Activated CD8-positive, alpha-beta T cell treated with anti-CD3 and anti-CD28 coated beads for 36 hours (primary cell): ENCODE measurements at regions of chr10 and their contacts with region 1.

Region 1: DNA sequence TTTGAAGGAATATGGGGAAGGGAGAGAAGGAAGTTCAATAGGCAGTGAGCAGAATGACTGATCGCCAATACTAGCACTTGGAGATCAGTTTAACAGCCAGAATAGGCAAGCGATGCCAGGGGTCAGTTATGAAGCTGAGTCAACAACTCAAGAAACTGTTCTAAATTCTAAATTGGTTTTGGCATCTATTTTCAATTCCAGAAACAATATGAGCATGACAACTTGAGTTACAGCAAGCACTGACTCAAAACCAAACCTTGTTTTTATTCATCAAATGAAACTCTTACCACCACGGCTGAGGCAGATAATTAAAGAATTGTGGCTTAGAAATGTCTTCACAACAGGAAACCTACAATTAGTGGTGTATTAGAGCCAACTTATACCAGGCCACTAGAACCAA is 180.5 kb upstream of the ASAH2 start:
- DNase-seq: peak; percentile 54
- ATAC-seq: peak; percentile 77
- H3K4me3 Mint-ChIP-seq: peak overlapping the region; percentile 4
- H3K27ac Mint-ChIP-seq: peak overlapping the region; percentile 39
- H3K4me1 Mint-ChIP-seq: peaks cover 31% of the 10 kb centered on the region
- H3K27me3 Mint-ChIP-seq: no peaks in the 10 kb centered on the region
- CTCF ChIP-seq: no peak

Region 2: DNA sequence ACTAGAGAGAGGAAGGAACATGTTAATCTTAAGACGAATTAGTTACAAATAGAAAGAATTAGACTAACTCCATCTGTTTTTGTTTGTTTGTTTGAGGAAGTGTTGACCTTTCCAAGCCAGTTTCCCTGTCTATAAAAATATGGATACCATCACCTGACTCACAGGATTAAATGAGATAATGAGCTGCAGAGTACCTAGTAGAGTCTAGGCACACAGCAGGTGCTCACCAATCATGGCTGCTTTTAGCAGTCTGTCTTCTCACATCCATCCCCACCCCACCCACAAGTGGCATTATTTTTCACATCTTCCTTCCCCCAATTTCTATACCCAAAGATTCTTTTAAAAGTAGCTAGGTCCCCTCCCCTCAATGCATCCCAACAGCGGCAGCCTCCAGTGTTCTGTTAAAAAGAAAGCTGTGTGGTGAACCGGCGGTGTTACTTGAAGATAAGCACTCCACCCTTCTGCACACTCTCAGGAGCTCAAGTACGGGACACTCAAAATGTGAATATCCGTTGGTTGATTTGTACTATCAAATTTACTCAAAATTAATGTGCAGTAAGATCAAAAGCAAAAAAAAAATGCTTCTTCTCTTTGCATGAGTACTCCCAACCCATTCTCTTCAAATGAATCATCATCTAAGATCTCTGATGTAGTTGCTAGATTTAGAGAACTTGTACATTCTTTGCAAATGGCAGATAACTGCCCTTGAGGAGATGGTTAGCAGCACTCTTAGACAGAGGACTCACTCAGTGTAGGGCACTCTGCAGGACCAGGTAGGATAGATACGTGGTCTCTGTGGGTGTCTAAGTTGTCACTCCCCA is 35.1 kb before region 1 on chr10:
- CTCF ChIA-PET with region 1: no interaction called
- POLR2A ChIA-PET with region 1: no interaction called
- intact Hi-C with region 1: no loop called
- DNase-seq: peak; percentile 39
- ATAC-seq: peak; percentile 84
- H3K4me3 Mint-ChIP-seq: peak overlapping the region; percentile 53
- H3K27ac Mint-ChIP-seq: peak overlapping the region; percentile 71
- H3K4me1 Mint-ChIP-seq: peaks cover 31% of the 10 kb centered on the region
- H3K27me3 Mint-ChIP-seq: no peaks in the 10 kb centered on the region
- CTCF ChIP-seq: no peak

Region 3: DNA sequence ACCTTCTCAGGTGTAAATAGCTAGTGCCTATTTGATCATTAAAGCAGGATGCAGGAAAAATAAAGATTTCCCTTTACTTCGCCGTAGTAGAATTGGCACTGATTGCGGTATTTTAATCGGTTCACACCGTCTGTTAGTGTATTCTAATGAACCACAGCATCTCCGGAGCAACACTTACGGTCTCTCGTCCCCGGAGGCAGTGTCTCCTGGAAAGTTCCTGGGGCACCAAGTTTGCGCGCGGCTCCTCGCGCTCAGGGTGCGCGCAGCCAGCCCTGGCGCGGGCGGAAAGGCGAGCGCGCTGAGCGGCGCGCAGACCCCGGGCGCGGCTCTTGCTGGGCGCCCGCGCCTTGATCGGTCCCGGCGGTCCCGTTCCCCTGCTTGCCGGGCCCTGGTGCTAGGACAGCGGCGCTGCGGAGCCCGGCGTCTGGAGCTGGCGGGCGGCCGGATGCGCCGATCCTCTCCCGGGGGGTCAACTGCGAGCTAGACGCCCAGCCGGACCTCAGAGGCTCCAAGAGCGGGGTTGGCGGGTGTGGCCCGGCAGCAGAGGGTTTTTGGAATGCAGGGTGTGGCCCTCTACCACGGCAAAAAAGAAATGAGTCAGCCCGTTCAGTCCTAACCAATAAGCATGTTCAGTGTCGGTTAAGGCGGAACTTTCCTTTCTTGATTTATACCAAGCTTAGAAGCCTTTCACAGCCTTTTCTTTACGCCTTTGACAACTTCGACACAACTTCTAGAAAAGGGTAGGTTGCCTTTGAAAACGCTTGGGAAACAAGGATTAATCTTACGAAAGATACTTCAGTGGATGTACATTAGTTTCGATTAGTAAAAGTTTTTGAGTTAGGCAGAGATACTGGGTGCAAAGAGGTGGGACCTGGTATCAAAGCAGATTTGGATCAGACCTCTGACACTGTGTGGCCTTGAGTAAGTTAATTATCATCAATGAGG is 13.6 kb before region 1 on chr10:
- CTCF ChIA-PET with region 1: interaction called, 10 read pairs
- POLR2A ChIA-PET with region 1: interaction called, 3 read pairs
- intact Hi-C with region 1: no loop called
- DNase-seq: peak; percentile 62
- ATAC-seq: peak; percentile 88
- H3K4me3 Mint-ChIP-seq: peak overlapping the region; percentile 77
- H3K27ac Mint-ChIP-seq: peak overlapping the region; percentile 64
- H3K4me1 Mint-ChIP-seq: peaks cover 34% of the 10 kb centered on the region
- H3K27me3 Mint-ChIP-seq: no peaks in the 10 kb centered on the region
- CTCF ChIP-seq: no peak

Region 4: GRCh38 chr10:50508315-50509051 is 76.7 kb after region 1 on chr10:
- CTCF ChIA-PET with region 1: no interaction called
- POLR2A ChIA-PET with region 1: no interaction called
- intact Hi-C with region 1: loop called (anchors 5 kb)
- DNase-seq: peak; percentile 67
- ATAC-seq: peak; percentile 55
- H3K4me3 Mint-ChIP-seq: no peak overlapping the region
- H3K27ac Mint-ChIP-seq: peak overlapping the region; percentile 10
- H3K4me1 Mint-ChIP-seq: peaks cover 79% of the 10 kb centered on the region
- H3K27me3 Mint-ChIP-seq: no peaks in the 10 kb centered on the region
- CTCF ChIP-seq: no peak